Activated CD4-positive, alpha-beta T cell treated with anti-CD3 and anti-CD28 coated beads, Interleukin-2, amount 10 ng/mL, durations not matched to agents 24 days and 14 days (primary cell): ENCODE measurements at regions of chr10 and their contacts with region 1.

Region 1: DNA sequence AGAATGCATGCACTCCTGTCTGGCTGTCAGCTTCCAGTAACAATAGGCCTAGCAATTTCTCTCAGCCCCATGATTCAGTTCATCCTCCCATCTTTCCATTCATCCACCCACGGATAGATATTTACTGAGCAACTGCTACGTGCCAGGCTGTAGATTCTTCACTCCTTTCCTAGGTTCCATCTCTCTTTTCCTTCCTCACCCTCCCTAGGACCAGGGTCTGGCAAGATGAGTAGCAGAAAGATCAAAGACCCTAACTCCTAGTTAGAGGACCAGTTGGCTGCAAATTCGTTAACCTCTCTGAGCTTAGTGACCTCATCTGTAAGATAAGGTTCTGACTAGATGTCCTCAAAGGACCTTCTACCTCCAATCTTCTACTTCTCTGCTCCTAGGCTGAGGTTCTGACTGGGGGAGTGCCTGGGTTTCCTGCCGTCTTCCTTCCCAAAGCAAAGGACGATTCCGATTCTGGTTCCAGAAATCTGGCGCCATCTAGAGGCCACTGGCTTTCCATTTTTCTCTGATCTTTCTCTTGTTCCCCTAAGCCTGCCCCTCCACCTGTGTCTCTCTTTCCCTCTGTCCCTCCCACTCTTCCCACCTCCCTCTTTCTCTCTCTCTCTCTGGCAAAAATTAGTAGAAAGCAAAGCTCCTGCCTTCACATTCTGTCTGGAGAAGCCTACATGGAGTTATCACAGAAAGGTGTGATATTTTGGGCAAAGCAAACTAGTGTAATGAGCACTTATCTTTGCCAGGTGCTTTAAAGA is 26.2 kb downstream of the TBATA start:
- DNase-seq: peak; percentile 91
- H3K4me3 Mint-ChIP-seq: no peak overlapping the region
- H3K27ac Mint-ChIP-seq: no peak overlapping the region
- H3K4me1 Mint-ChIP-seq: peaks cover 8% of the 10 kb centered on the region
- H3K27me3 Mint-ChIP-seq: no peaks in the 10 kb centered on the region

Region 2: GRCh38 chr10:70461215-70461986 is 297.5 kb before region 1 on chr10:
- intact Hi-C with region 1: loop called (anchors 10 kb)
- DNase-seq: peak; percentile 82
- H3K4me3 Mint-ChIP-seq: no peak overlapping the region
- H3K27ac Mint-ChIP-seq: no peak overlapping the region
- H3K4me1 Mint-ChIP-seq: no peaks in the 10 kb centered on the region
- H3K27me3 Mint-ChIP-seq: peaks cover 48% of the 10 kb centered on the region

Region 3: GRCh38 chr10:70549962-70550458 is 208.9 kb before region 1 on chr10:
- intact Hi-C with region 1: loop called (anchors 1 kb)
- DNase-seq: peak; percentile 92
- H3K4me3 Mint-ChIP-seq: no peak overlapping the region
- H3K27ac Mint-ChIP-seq: no peak overlapping the region
- H3K4me1 Mint-ChIP-seq: no peaks in the 10 kb centered on the region
- H3K27me3 Mint-ChIP-seq: peaks cover 1% of the 10 kb centered on the region

Region 4: DNA sequence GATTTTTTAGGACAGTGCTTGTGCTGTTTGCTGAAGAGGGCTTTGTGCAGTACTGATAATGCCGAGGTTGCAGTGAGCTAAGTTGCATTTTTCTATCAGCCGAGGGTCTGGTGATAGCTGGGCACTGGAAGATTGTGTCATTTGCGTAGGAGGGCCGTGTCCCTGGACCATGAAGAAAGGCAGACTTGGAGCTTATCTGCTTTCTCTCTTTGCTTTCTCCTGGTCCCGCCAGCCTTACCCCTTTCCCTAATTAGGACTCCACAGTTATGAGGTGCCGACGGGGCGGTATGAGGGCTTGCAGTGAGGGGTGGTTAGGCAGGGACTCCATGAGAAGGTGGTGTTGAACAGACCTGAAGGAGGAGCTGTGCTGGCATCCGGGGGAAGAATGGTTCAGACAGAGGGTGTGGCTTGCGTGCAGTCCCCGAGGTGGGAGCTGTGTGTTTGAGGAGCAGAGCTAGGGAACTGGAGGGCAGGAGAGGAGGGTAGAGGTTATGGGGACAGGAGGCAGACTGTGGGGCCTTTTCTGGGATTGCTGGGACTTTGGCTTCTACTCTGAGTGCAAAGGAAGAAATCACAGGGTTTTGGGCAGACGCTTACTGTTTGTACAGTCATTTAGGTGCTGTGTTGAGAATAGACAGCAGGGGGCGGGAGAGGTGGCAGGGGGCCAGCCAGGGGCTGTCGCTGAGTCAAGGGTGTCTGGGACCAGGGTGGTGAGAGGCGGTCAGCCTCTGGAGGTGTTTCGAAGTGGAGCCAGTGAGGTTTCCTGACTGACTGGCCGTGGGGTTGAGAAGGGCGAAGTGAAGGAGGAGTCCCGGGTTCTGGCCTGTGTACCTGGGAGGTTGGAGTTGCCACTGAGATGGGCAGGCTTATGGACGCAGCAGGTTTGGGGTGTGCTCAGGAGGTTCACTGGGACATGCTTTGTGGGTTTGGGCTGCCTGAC is 199.8 kb before region 1 on chr10:
- intact Hi-C with region 1: loop called (anchors 2 kb)
- DNase-seq: peak; percentile 90
- H3K4me3 Mint-ChIP-seq: peak overlapping the region; percentile 76
- H3K27ac Mint-ChIP-seq: peak overlapping the region; percentile 70
- H3K4me1 Mint-ChIP-seq: peaks cover 24% of the 10 kb centered on the region
- H3K27me3 Mint-ChIP-seq: no peaks in the 10 kb centered on the region